ENCODE measurements at regions of chr7 and their contacts with region 1.

Region 1: DNA sequence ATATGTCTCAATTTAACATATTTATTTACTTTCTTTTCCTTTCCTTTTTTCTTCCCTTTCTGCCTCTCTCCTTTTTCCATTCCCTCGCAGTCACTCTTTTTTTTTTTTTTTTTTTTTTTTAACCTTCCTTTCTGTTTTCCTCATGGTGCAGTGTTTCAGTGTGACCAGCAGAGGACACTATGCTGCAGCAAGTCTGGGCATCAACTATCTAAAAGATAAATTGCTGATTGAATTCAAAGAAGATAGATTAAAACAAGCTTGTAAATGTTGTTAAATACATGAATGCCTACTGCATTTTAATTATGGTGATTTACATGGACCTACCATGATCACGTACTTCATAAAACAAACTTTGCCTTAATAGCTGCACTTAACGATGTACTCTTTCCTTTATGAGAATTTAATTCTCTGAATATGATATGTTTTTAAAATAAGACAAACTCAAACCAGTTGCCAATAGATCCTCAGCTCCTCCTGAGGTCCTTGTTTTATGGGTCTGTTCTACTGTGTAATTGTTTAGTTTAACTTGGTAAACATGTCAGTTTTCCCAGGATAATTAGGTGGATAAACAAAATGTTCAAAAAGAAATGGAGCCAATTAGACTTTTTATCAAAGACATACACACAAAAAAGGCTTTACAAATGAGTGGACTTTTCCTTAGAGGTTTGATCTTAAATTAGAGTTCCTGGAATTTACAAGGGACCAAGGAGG is 101.0 kb upstream of the AGR3 start:
- DNase-seq: no peak
- H3K4me3 ChIP-seq: no peak overlapping the region
- H3K27ac ChIP-seq: no peak overlapping the region
- H3K27me3 ChIP-seq: no peaks in the 10 kb centered on the region
- CTCF ChIP-seq: peak; percentile 98

Region 2: DNA sequence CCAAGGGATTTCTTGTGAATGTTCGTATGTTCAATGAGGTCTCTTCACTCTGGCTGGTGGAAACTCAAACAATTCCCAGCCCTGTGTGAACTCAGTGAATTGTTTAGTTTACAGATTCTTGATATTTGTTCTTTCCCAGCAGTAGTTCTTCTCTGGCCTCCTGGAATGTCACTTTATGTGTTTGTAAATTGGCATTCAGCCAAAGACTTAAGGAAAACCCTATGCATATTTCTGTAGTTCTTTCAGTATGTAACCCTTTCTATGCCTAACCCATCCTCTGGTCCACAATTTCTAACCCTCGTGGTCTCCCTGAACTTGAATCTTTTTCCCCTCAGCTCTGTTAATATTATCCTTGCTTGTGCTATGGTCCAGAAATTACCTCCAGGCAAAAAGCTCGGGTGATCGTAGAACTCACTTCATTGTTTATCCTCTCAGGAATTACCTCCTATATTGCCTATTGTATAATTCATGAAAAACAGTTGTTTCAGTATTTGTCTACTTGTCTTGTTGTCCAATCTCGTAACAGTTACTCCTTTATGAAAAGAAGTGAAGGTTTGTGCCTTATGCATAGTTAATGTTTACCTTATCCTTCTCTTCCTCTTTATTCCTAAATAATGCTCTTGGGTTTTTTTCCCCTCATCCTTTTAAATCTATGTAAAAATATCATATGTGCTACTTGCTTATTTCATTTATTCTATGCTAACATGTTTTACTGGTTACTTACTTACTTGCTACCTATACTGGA is 77.3 kb before region 1 on chr7:
- CTCF ChIA-PET with region 1: interaction called, 11 read pairs
- POLR2A ChIA-PET with region 1: no interaction called
- DNase-seq: peak; percentile 52
- H3K4me3 ChIP-seq: no peak overlapping the region
- H3K27ac ChIP-seq: no peak overlapping the region
- H3K27me3 ChIP-seq: no peaks in the 10 kb centered on the region
- CTCF ChIP-seq: no peak

Region 3: DNA sequence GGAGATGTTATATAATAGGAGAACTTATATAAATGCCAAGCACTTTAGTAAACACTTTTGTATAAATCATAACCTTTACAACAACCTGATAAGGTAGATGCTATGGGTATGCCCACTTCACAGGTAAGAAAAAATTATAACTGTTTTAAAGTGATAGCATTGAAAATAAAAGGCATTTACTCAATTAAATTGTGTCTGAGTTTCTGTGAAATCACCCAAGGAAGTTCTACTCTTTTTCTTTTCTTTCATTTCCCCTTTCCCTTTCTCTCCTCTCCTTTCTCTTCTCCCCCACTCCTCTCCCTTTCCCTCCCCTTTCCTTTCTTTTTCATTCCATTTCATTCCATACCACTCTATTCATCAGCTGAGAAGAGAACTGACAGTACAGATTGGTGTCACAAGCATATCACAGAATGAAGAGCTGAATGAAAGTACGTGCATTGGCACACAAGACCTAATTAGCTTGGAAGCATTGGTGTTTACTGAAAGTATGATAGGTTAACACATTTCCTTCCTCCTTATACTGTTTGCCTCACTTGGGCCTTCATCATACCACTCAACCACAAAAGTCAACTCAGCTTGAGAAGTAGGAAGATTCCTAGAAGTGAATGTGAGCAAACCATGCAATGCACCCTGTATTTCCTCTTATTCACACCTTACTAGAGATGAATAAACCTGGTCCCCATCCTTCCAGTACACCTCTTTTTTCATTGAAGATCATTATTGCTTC is 16.9 kb after region 1 on chr7:
- CTCF ChIA-PET with region 1: interaction called, 11 read pairs
- POLR2A ChIA-PET with region 1: no interaction called
- DNase-seq: no peak
- H3K4me3 ChIP-seq: no peak overlapping the region
- H3K27ac ChIP-seq: no peak overlapping the region
- H3K27me3 ChIP-seq: no peaks in the 10 kb centered on the region
- CTCF ChIP-seq: no peak

Region 4: DNA sequence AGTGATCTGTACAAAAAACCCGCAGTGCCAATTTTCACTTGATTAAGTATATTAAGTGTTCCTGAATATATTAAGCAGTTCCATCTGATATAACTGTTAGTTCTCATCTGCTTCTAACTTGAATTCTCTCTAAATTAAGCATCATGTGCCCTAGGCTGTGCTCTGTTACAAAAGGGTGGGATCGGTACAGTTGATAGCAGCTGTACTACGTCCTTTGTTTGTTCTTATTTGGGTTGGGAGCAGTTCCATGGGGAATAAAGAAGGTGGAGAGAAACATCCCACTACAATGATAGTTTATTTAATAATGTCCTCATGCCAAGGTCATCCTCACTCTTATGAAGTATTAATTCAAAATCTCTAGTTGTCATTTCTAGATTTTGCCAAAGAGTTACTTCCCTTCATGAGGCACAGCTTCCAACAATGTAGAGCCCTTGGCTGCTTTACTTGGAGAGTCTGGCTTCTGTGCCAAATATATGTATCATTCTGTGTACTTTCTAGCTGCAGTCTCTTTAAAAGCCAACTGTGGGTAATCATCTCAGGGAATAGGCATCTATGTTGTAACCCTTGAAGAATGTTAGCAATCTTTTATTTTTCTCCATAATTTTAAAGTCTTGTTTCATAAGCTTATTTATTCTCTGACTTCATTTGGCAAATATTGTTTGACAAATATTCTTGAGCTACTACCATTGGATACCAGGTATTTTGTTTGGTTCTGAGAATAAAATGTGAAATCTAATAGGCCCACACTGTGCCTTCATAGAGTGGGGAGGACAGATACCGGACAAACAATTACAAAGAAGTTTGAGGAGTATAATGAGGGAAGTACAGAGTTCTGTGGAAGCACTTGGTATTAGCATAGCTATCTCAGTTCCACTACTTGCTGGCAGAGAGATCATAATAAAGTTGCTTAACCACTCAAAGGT is 293.2 kb after region 1 on chr7:
- CTCF ChIA-PET with region 1: interaction called, 22 read pairs
- POLR2A ChIA-PET with region 1: no interaction called
- DNase-seq: peak; percentile 79
- H3K4me3 ChIP-seq: no peak overlapping the region
- H3K27ac ChIP-seq: peak overlapping the region; percentile 84
- H3K27me3 ChIP-seq: no peaks in the 10 kb centered on the region
- CTCF ChIP-seq: no peak

Region 5: DNA sequence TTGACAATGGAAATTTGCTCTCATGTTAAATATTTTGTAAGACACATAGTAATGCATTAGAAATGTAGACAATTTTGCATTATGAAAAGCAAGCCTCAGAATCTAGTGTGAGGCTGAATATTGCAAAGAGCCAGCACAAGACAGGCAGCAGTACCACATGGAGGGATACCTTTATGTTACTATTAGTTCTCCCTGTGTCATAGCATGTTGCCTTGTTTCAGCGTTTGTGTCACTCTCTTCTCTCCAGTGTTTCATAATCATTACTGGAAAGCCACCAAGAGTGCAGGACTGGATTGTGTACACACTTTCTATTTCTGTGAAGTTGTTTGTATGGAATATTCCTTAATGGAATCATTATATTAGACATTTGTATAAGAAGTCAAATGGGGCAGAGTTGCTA is 324.2 kb after region 1 on chr7:
- CTCF ChIA-PET with region 1: interaction called, 45 read pairs
- POLR2A ChIA-PET with region 1: no interaction called
- DNase-seq: no peak
- H3K4me3 ChIP-seq: no peak overlapping the region
- H3K27ac ChIP-seq: no peak overlapping the region
- H3K27me3 ChIP-seq: no peaks in the 10 kb centered on the region
- CTCF ChIP-seq: no peak

Region 6: DNA sequence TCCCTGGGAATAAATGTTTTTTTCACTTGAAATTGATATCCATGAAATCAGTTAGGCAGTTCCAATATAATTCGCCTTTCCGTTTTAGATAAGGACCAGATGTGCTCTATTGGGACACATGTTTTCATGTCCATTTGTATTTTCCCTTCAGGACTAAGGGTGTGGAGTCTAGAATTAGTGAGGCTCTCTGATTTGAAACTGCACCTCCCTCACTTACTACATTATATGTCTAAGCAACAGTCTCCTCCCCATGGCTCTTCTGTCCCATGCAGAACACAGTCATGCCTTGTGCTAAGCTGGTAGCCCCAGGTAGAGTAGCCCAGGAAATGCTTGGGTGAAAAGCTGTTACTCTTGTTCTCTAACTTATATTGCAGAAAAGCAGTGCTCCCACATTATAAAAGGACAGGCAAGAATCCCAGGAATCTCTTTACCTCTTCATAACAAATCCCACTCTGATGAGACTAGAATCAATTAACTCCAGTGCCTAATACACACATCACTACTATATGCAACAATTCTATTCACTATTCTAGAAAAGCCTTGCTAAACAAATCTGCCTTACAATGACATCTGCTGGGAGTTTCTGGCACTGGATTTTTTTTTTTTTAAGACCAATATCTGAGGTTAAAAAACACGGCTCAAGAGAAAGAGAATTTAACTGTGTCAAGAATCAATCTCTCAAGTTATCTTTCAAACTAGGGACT is 663.6 kb after region 1 on chr7:
- CTCF ChIA-PET with region 1: interaction called, 49 read pairs
- POLR2A ChIA-PET with region 1: no interaction called
- DNase-seq: no peak
- H3K4me3 ChIP-seq: no peak overlapping the region
- H3K27ac ChIP-seq: no peak overlapping the region
- H3K27me3 ChIP-seq: no peaks in the 10 kb centered on the region
- CTCF ChIP-seq: peak; percentile 64

Measured in AG04450 (cell line).